Spleen (tissue), 13 donors: ENCODE measurements at regions of chr2 and their contacts with region 1.

Region 1: GRCh38 chr2:171095014-171095582 is 65.6 kb downstream of the TLK1 start:
- DNase-seq: no peak
- H3K4me3 ChIP-seq: no peak overlapping the region
- H3K27ac ChIP-seq: no peak overlapping the region
- H3K4me1 ChIP-seq: peaks cover 0 to 31% (median 8%) of the 10 kb centered on the region in 6 donors
- H3K27me3 ChIP-seq: no peaks in the 10 kb centered on the region
- CTCF ChIP-seq: no peak
- POLR2A ChIP-seq: no peak

Region 2: GRCh38 chr2:171141320-171141719 is 46.2 kb after region 1 on chr2:
- intact Hi-C with region 1: loop called (anchors 10 kb)
- DNase-seq: no peak
- H3K4me3 ChIP-seq: no peak overlapping the region
- H3K27ac ChIP-seq: no peak overlapping the region
- H3K4me1 ChIP-seq: peaks cover 32 to 100% (median 87%) of the 10 kb centered on the region in 6 donors
- H3K27me3 ChIP-seq: no peaks in the 10 kb centered on the region
- CTCF ChIP-seq: no peak
- POLR2A ChIP-seq: no peak